ENCODE measurements at regions of chr5 and their contacts with region 1.

Region 1: DNA sequence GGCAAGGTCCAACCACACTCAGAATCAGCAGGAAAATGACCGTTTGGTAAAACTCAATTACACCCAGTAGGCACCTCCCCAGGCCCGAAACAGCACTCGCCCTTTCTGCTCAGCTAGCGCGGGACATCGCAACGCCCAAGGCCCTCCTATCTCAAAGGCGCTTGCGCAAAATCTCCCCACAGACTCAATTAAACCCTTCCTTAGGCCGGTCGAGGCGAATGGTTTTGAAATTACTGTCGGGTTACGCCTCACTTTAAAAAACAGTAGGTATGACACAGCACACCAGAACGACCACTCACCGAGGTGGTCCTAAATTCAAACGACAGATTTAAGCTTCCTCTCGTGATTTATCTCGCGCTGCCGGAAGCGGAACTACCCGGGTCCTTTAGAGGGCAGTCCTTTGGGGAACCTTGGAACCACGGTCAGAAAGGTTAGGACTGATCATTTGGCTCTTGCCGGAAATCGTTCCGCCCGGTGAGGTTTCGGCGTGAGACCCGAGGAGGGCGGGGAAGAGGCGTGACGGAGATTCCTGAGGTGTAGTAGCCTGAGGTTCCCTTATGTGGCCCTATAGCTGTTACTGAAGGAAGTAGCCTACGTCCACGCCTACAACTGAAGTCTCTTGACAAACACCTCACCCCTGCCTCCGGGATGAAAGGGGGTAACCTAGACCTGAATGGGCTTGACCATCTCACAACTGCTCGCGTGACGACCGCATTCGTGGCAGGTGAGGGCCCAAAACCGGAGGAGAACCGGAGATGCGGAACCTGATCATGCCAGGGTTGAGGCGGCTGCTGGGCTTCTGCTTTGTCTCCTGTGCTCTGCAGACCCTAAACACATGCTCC is at the starts of genes GIN1 and PPIP5K2:
- DNase-seq: peak; percentile 96
- H3K4me3 Mint-ChIP-seq: peak within 1 kb of the TSS; percentile 95
- H3K27ac Mint-ChIP-seq: peak within 1 kb of the TSS; percentile 99
- H3K4me1 Mint-ChIP-seq: peaks cover 44% of the 10 kb centered on the region
- H3K27me3 Mint-ChIP-seq: no peaks in the 10 kb centered on the region
- total RNA-seq, gene GIN1: 7.0 and 8.8 TPM in 2 replicates
- total RNA-seq, gene PPIP5K2: 44.1 and 52.5 TPM in 2 replicates

Region 2: GRCh38 chr5:102591650-102592049 is 528.3 kb before region 1 on chr5:
- intact Hi-C with region 1: loop called (anchors 5 kb)
- DNase-seq: no peak
- H3K4me3 Mint-ChIP-seq: no peak overlapping the region
- H3K27ac Mint-ChIP-seq: peak overlapping the region; percentile 4
- H3K4me1 Mint-ChIP-seq: peaks cover 15% of the 10 kb centered on the region
- H3K27me3 Mint-ChIP-seq: peaks cover 7% of the 10 kb centered on the region

Region 3: GRCh38 chr5:102755686-102756371 is 364.2 kb before region 1 on chr5:
- intact Hi-C with region 1: loop called (anchors 1 kb)
- DNase-seq: peak; percentile 49
- H3K4me3 Mint-ChIP-seq: peak overlapping the region; percentile 98
- H3K27ac Mint-ChIP-seq: peak overlapping the region; percentile 95
- H3K4me1 Mint-ChIP-seq: peaks cover 39% of the 10 kb centered on the region
- H3K27me3 Mint-ChIP-seq: peaks cover 12% of the 10 kb centered on the region

Region 4: DNA sequence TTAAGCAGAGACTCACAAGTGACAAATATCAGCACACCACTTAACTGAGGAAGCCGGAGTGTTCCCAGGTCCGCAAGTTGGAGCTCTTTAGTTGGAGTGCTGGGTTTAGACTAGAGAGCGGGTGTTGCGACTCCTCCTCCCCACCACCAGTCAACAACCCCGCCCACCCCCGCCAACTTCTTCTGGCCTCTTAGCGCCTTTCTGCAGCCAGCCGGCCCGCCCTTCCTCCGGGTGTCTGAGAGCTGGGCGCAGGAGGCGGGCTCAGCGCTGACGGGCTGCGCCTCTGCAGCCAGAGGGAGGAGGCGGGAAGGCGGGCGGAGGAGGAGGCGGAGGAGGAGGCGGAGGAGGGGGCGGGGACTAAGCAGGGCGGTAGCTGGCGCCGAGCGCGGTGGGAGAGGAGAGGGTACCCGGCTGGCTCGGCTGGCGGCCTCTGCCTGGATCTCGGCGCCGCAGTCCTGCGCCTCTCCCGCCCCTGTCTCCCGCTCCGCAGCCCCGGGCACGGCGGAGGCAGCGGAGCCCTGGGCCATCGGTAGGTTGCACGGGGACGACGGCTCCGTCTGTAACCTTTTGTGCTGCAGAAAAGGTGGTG is 138.5 kb after region 1 on chr5 and contains the start of gene MACIR:
- intact Hi-C with region 1: loop called (anchors 1 kb)
- DNase-seq: peak; percentile 92
- H3K4me3 Mint-ChIP-seq: peak within 1 kb of the TSS; percentile 92
- H3K27ac Mint-ChIP-seq: peak within 1 kb of the TSS; percentile 75
- H3K4me1 Mint-ChIP-seq: peaks cover 28% of the 10 kb centered on the region
- H3K27me3 Mint-ChIP-seq: peaks cover 11% of the 10 kb centered on the region
- total RNA-seq, gene MACIR: 12.3 TPM in 2 replicates

Region 5: DNA sequence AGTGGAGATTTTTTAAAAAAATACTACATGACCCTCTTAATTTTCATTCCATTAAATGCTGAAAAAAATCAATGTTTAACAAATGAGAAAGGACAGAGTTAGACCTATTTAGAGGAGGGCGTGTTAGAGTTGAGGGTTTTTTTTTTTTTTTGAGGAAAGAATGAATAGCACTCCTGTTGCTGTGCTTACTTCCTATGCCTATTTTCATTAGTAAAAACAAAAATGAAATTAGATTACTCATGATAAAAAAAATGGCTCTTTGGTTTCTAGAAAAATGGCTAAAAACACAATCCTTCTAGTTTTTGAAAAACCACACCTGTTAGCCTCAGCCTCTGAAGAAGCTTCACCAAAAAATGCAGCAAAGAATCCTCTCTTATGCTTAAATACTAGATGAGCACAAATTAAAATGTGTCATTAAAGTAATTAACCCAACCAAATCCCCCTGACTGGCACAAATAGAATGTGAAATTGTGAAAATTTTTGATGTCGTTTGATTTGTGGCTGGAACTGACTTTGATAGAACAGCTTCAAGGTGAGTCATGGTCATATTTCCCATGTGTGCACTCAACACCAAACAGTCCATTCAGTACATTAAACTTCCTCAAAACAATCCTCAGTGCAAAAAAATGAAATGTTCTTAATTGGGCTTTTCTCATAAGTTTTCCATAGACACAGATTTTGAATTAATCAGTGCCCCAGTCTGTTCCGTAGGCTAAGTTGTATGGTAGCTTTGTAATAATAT is 236.5 kb after region 1 on chr5:
- intact Hi-C with region 1: loop called (anchors 1 kb)
- DNase-seq: no peak
- H3K4me3 Mint-ChIP-seq: no peak overlapping the region
- H3K27ac Mint-ChIP-seq: peak overlapping the region; percentile 49
- H3K4me1 Mint-ChIP-seq: peaks cover 18% of the 10 kb centered on the region
- H3K27me3 Mint-ChIP-seq: peaks cover 15% of the 10 kb centered on the region